Posterior vena cava (tissue), 2 donors: ENCODE measurements at regions of chr16 and their contacts with region 1.

Region 1: GRCh38 chr16:81077076-81077940 is at the start of gene C16orf46:
- DNase-seq: peak; percentile 99
- total RNA-seq, gene C16orf46: 0.57 TPM in 1 of 2 donors, not detected in the other

Region 2: GRCh38 chr16:81006814-81007696 is 70.3 kb before region 1 on chr16 and contains the starts of genes CENPN and CMC2:
- intact Hi-C with region 1: loop called in 1 of 2 experiments (anchors 10 kb)
- DNase-seq: peak; percentile 100
- total RNA-seq, gene CENPN: 4.2 to 6.4 TPM
- total RNA-seq, gene CMC2: 34.8 to 46.1 TPM

Region 3: DNA sequence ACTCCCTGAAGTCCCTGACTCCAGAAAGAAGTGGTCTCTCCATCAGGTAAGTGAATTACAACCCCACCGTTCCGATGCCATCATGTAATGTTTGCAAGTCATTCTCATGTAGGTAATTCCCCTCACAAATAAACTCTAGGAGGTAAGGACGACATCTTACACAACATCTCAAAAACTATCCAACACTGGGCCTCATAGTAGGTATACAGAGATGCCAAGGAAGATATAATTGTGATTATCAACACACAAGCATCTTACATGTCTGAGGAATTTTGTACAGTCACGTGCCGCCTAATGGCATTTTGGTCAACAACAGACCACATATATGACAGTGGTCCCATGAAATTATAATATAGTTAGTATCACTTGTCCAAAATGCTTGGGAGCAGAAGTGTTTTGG is 11.5 kb after region 1 on chr16:
- intact Hi-C with region 1: no loop called
- DNase-seq: no peak